ENCODE measurements at regions of chr12 and their contacts with region 1.

Region 1: DNA sequence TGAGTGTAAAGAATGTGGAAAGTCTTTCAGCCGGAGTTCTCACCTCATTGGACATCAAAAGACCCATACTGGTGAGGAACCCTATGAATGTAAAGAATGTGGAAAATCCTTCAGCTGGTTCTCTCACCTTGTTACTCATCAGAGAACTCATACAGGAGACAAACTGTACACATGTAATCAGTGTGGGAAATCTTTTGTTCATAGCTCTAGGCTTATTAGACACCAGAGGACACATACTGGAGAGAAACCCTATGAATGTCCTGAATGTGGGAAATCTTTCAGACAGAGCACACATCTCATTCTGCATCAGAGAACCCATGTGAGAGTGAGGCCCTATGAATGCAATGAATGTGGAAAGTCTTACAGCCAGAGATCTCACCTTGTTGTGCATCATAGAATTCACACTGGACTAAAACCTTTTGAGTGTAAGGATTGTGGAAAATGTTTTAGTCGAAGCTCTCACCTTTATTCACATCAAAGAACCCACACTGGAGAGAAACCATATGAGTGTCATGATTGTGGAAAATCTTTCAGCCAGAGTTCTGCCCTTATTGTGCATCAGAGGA is 25.1 kb upstream of the ZNF268 start:
- DNase-seq: no peak
- ATAC-seq: no peak
- H3K4me3 ChIP-seq: no peak overlapping the region
- H3K27ac ChIP-seq: no peak overlapping the region
- H3K4me1 ChIP-seq: no peaks in the 10 kb centered on the region
- H3K27me3 ChIP-seq: no peaks in the 10 kb centered on the region
- CTCF ChIP-seq: no peak
- EP300 ChIP-seq: no peak
- POLR2A ChIP-seq: no peak
- RAD21 ChIP-seq: no peak

Region 2: DNA sequence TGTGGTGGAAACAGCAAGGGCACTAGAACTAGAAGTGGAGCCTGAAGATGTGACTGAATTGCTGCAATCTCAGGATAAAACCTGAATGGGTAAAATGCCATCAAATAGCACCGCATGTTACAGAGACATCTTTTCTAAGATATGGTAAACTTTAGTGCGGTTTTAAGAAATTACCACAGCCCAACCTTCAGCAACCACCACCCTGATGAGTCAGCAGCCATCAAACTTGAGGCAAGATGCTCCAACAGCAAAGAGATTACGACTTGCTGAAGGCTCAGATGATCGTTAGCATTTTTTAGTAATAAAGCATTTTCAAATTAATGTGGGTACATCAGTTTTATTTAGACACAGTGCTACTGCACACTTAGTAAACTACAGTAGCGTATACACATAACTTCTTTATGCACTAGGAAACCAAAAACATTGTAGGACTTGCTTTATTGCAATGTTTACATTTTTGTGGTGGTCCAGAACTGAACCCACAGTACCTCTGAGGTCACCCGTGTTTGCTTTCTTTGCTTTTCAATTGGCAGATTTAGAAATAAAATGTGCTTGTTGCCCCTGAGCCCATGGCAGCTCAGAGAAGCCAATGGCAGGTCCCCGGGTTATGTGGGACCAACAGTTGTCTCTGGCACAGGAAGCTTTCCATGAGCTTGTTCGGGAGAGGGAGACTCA is 343.4 kb before region 1 on chr12:
- CTCF ChIA-PET with region 1: no interaction called
- POLR2A ChIA-PET with region 1: no interaction called
- in situ Hi-C with region 1: no loop called
- intact Hi-C with region 1: no loop called
- DNase-seq: no peak
- ATAC-seq: no peak
- H3K4me3 ChIP-seq: no peak overlapping the region
- H3K27ac ChIP-seq: no peak overlapping the region; the same call in 2 of the 3 replicates
- H3K4me1 ChIP-seq: peaks cover 0 to 6% of the 10 kb centered on the region in 2 experiments; a peak in 3 of 5 replicates
- H3K27me3 ChIP-seq: no peaks in the 10 kb centered on the region
- CTCF ChIP-seq: no peak
- EP300 ChIP-seq: no peak
- POLR2A ChIP-seq: no peak
- RAD21 ChIP-seq: no peak

Region 3: DNA sequence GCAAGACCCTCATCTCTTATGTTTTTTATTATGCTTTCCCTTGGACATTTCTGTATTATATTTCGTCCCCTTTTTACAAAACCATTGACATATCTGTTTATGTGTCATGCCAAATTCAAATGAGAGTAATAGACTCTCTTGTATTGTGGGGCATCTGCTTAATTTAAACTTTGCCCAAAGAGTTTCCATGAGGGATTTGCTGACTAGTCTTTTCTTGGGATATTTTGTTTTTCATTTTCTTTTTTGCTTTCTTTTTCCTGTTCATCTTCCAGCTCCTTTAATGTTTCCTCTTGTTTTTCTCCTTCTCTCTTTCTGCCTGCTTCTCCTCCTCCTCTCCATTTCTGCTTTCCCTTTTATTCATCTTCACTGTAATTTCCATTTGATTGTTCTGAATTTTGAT is 183.8 kb before region 1 on chr12:
- CTCF ChIA-PET with region 1: no interaction called
- POLR2A ChIA-PET with region 1: no interaction called
- in situ Hi-C with region 1: no loop called
- intact Hi-C with region 1: no loop called
- DNase-seq: no peak
- ATAC-seq: no peak
- H3K4me3 ChIP-seq: no peak overlapping the region
- H3K27ac ChIP-seq: no peak overlapping the region
- H3K4me1 ChIP-seq: no peaks in the 10 kb centered on the region
- H3K27me3 ChIP-seq: no peaks in the 10 kb centered on the region
- CTCF ChIP-seq: no peak
- EP300 ChIP-seq: no peak
- POLR2A ChIP-seq: no peak
- RAD21 ChIP-seq: no peak

Region 4: GRCh38 chr12:133172491-133172890 is 16.3 kb after region 1 on chr12:
- CTCF ChIA-PET with region 1: no interaction called
- POLR2A ChIA-PET with region 1: no interaction called
- in situ Hi-C with region 1: no loop called
- intact Hi-C with region 1: loop called (anchors 2 kb)
- DNase-seq: no peak
- ATAC-seq: no peak
- H3K4me3 ChIP-seq: no peak overlapping the region
- H3K27ac ChIP-seq: no peak overlapping the region
- H3K4me1 ChIP-seq: no peaks in the 10 kb centered on the region
- H3K27me3 ChIP-seq: no peaks in the 10 kb centered on the region
- CTCF ChIP-seq: no peak
- EP300 ChIP-seq: no peak
- POLR2A ChIP-seq: no peak
- RAD21 ChIP-seq: no peak